ENCODE measurements at regions of chr17 and their contacts with region 1.

Region 1: GRCh38 chr17:5931616-5932015 is 138.6 kb upstream of the WSCD1 start:
- DNase-seq: no peak
- H3K4me3 ChIP-seq: no peak overlapping the region
- H3K27ac ChIP-seq: no peak overlapping the region
- H3K4me1 ChIP-seq: no peaks in the 10 kb centered on the region
- H3K27me3 ChIP-seq: peaks cover 59% of the 10 kb centered on the region
- CTCF ChIP-seq: no peak

Region 2: GRCh38 chr17:5864910-5865657 is 66.5 kb before region 1 on chr17:
- CTCF ChIA-PET with region 1: no interaction called
- POLR2A ChIA-PET with region 1: interaction called, 10 read pairs
- intact Hi-C with region 1: no loop called
- DNase-seq: no peak
- H3K4me3 ChIP-seq: no peak overlapping the region
- H3K27ac ChIP-seq: no peak overlapping the region
- H3K4me1 ChIP-seq: no peaks in the 10 kb centered on the region
- H3K27me3 ChIP-seq: peaks cover 73% of the 10 kb centered on the region
- CTCF ChIP-seq: no peak

Region 3: GRCh38 chr17:5902181-5903140 is 29.2 kb before region 1 on chr17:
- CTCF ChIA-PET with region 1: no interaction called
- POLR2A ChIA-PET with region 1: no interaction called
- intact Hi-C with region 1: no loop called
- DNase-seq: no peak
- H3K4me3 ChIP-seq: no peak overlapping the region
- H3K27ac ChIP-seq: no peak overlapping the region
- H3K4me1 ChIP-seq: no peaks in the 10 kb centered on the region
- H3K27me3 ChIP-seq: peaks cover 38% of the 10 kb centered on the region
- CTCF ChIP-seq: no peak